ENCODE measurements at regions of chr12 and their contacts with region 1.

Region 1: GRCh38 chr12:6662906-6663742 is at the start of gene ING4:
- DNase-seq: peak; percentile 99
- H3K4me3 ChIP-seq: peak within 1 kb of the TSS; percentile 23 to 95 (median 82)
- H3K27ac ChIP-seq: peak within 1 kb of the TSS; percentile 61
- H3K4me1 ChIP-seq: peaks cover 10% of the 10 kb centered on the region
- H3K27me3 ChIP-seq: no peaks in the 10 kb centered on the region
- CTCF ChIP-seq: no peak
- POLR2A ChIP-seq: peak; percentile 60
- total RNA-seq, gene ING4: 26.3 and 34.7 TPM in 2 replicates

Region 2: GRCh38 chr12:6647083-6647604 is 16.0 kb before region 1 on chr12 and contains the start of gene ACRBP:
- CTCF ChIA-PET with region 1: interaction called, 3 read pairs
- POLR2A ChIA-PET with region 1: no interaction called
- dilution Hi-C with region 1: no loop called
- intact Hi-C with region 1: loop called (anchors 2 kb)
- DNase-seq: peak; percentile 73
- H3K4me3 ChIP-seq: peak within 1 kb of the TSS; percentile 31 to 56 (median 48)
- H3K27ac ChIP-seq: no peak within 1 kb of the TSS
- H3K4me1 ChIP-seq: peaks cover 3% of the 10 kb centered on the region
- H3K27me3 ChIP-seq: no peaks in the 10 kb centered on the region
- CTCF ChIP-seq: no peak
- POLR2A ChIP-seq: peak; percentile 88
- total RNA-seq, gene ACRBP: 0.97 and 1.3 TPM in 2 replicates

Region 3: GRCh38 chr12:6695313-6696045 is 32.4 kb after region 1 on chr12:
- CTCF ChIA-PET with region 1: no interaction called
- POLR2A ChIA-PET with region 1: no interaction called
- dilution Hi-C with region 1: no loop called
- intact Hi-C with region 1: no loop called
- DNase-seq: no peak
- H3K4me3 ChIP-seq: no peak overlapping the region
- H3K27ac ChIP-seq: no peak overlapping the region
- H3K4me1 ChIP-seq: peaks cover 2% of the 10 kb centered on the region
- H3K27me3 ChIP-seq: peaks cover 16 to 25% of the 10 kb centered on the region in 2 experiments
- CTCF ChIP-seq: no peak
- POLR2A ChIP-seq: no peak

Region 4: GRCh38 chr12:6723607-6724396 is 60.7 kb after region 1 on chr12 and contains the start of gene COPS7A:
- CTCF ChIA-PET with region 1: no interaction called
- POLR2A ChIA-PET with region 1: no interaction called
- dilution Hi-C with region 1: no loop called
- intact Hi-C with region 1: loop called (anchors 1 kb)
- DNase-seq: peak; percentile 98
- H3K4me3 ChIP-seq: peak within 1 kb of the TSS; percentile 45 to 48 (median 47)
- H3K27ac ChIP-seq: peak within 1 kb of the TSS; percentile 52
- H3K4me1 ChIP-seq: peaks cover 11% of the 10 kb centered on the region
- H3K27me3 ChIP-seq: no peaks in the 10 kb centered on the region
- CTCF ChIP-seq: no peak
- POLR2A ChIP-seq: peak; percentile 35
- total RNA-seq, gene COPS7A: 36.5 and 41.1 TPM in 2 replicates

Measured in endothelial cell of umbilical vein (primary cell).